ENCODE measurements at regions of chr11 and their contacts with region 1.

Region 1: DNA sequence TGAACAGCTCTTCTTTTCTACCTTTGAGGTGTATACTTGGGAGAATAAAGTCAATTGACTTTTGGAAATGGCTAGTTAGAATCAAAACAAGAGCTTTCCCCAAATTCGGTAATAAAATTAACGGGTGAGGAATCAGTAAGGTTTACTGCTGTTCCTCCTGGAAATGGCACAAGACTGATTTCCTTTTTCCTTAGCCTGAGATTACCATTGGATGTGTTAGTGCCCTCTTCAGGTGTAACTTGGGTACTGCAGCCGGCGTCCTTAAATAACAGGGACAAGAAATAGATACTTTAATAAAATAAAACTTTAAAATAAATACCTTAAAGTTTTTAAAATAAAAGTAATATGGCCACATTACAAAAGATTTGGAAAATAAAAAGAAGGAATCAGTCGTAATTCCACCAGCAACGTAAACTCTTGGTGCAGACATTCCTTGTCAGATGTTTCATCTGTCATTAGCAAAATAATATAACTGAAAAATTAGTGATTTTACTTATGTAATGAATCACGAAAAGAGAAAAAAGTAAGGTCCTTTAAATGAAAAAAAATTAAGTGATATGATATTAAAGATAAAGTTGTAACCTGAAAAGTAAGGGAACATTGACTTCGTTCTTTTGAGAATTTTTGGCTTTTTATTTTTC is 29.7 kb downstream of the ZFTA start:
- DNase-seq: no peak
- H3K4me3 ChIP-seq: no peak overlapping the region
- H3K27ac ChIP-seq: peak overlapping the region in 1 of 4 donors; percentile 7
- H3K4me1 ChIP-seq: peaks cover 0 to 10% (median 0%) of the 10 kb centered on the region in 3 donors
- H3K27me3 ChIP-seq: no peaks in the 10 kb centered on the region
- CTCF ChIP-seq: peak; percentile 83 to 99 (median 94)
- POLR2A ChIP-seq: no peak

Region 2: GRCh38 chr11:63289658-63290057 is 449.2 kb before region 1 on chr11:
- intact Hi-C with region 1: no loop called
- DNase-seq: no peak
- H3K4me3 ChIP-seq: no peak overlapping the region
- H3K27ac ChIP-seq: no peak overlapping the region
- H3K4me1 ChIP-seq: no peaks in the 10 kb centered on the region
- H3K27me3 ChIP-seq: peaks cover 0 to 4% (median 0%) of the 10 kb centered on the region in 4 donors
- CTCF ChIP-seq: no peak
- POLR2A ChIP-seq: no peak

Region 3: DNA sequence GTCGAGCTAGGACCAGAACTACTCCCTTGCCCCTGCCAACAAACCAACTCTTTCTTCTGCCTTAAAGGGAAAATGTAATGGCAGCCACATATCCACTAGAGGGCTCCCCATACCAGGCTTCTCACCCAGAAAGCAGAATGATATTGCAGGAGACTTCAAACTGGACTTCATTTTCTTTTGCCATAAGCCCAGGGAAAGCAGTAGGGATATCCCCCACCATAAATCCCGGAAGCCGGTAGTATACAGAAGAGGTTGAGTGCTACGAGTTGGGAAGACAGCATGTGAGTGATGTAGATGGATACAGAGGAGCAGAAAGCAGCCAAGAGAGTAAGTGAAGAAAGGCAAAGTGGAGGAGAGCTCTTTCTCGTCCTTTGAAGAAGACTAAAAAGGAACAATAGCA is 259.9 kb before region 1 on chr11:
- intact Hi-C with region 1: loop called (anchors 10 kb)
- DNase-seq: no peak
- H3K4me3 ChIP-seq: no peak overlapping the region
- H3K27ac ChIP-seq: no peak overlapping the region
- H3K4me1 ChIP-seq: no peaks in the 10 kb centered on the region
- H3K27me3 ChIP-seq: no peaks in the 10 kb centered on the region
- CTCF ChIP-seq: peak; percentile 60 to 92 (median 88)
- POLR2A ChIP-seq: no peak

Region 4: GRCh38 chr11:63641727-63642126 is 97.1 kb before region 1 on chr11:
- intact Hi-C with region 1: loop called (anchors 10 kb)
- DNase-seq: no peak
- H3K4me3 ChIP-seq: no peak overlapping the region
- H3K27ac ChIP-seq: no peak overlapping the region
- H3K4me1 ChIP-seq: peaks cover 0 to 5% (median 0%) of the 10 kb centered on the region in 3 donors
- H3K27me3 ChIP-seq: no peaks in the 10 kb centered on the region
- CTCF ChIP-seq: no peak
- POLR2A ChIP-seq: no peak

Region 5: GRCh38 chr11:63681321-63682049 is 57.4 kb before region 1 on chr11 and contains the start of gene RTN3:
- intact Hi-C with region 1: loop called (anchors 10 kb)
- DNase-seq: peak; percentile 69
- H3K4me3 ChIP-seq: peak within 1 kb of the TSS; percentile 71 to 93 (median 90)
- H3K27ac ChIP-seq: peak within 1 kb of the TSS; percentile 95 to 98 (median 98)
- H3K4me1 ChIP-seq: peaks cover 19 to 50% (median 20%) of the 10 kb centered on the region in 3 donors
- H3K27me3 ChIP-seq: no peaks in the 10 kb centered on the region
- CTCF ChIP-seq: peak in 3 of 6 experiments; percentile 18 to 82 (median 26)
- POLR2A ChIP-seq: peak in 3 of 4 donors; percentile 86 to 97 (median 96)
- total RNA-seq, gene RTN3: 48.0 to 78.3 (median 58.4) TPM

Region 6: DNA sequence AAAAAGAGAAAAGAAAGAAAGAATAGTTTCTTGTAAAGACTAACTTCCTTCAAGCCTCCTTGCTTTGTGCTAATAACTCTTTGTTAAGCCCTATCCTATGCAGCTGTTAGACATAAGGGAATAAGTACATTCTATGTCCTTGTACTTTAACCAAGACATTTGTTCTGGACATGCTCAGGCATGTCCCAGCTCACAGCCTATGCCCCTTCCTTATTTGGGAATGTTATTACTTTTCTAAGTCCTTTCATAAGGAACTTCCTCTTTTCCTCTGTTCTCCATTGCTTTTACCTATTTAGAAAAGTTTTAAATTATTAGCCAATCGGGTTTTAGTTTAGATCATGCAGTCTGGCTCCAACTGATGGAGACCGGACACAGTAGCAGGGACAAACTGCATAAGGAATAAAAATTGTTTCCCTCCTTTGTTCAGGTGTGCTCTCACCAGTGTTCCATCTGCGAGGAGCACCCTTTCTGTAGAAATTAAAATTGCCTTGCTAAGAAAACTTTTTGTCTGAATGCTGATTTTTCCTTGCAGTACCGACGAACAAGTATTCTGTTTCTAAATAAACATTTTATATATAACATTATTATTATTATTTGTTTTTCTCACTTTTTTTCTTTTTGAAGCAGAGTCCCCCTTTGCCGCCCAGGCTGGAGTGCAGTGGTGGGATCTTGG is 52.8 kb after region 1 on chr11:
- intact Hi-C with region 1: no loop called
- DNase-seq: no peak
- H3K4me3 ChIP-seq: no peak overlapping the region
- H3K27ac ChIP-seq: no peak overlapping the region
- H3K4me1 ChIP-seq: no peaks in the 10 kb centered on the region
- H3K27me3 ChIP-seq: no peaks in the 10 kb centered on the region
- CTCF ChIP-seq: no peak
- POLR2A ChIP-seq: no peak

Region 7: DNA sequence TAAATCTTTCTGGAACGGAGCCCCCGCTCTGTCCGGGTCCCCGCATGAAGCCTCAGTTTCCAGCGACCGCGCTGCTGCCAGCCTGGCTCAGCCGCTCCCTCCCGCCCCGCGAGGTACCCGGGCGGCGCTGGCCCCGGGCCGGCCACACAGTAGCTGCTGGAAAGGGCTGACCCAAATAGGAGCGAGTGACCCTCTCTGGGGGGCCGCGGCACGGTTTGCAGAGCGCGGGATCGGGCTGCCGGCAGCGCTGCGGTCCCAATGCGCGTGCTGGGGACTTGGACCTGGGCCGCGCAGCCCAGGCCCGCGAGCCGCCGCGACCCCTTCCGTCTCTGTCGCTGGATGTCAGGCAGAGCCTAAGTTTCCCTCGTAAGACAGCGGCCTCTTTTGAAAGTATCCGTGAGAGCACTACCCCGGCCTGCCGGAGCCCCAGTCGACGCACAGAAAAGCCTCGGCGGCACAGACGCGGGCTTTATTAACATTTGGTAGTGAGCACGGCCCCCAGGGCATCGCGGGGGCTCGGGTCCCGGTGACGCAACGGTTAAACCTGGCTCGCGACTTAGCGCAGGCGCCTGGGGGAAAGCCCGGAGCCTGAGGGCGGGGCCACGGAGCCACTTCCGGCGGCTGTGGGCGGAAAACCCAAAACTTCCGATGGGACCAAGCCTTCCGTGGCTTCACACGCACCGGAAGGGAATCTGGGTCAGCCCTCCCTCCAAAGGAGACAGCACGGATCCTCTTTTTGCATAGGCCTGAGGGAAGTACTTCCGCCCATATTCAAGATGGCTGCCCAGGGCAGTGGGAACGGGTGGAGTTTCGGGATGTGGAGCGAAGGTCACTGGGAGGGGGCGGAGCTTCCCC is 530.8 kb after region 1 on chr11:
- intact Hi-C with region 1: no loop called
- DNase-seq: peak; percentile 83
- H3K4me3 ChIP-seq: peak overlapping the region; percentile 58 to 87 (median 76)
- H3K27ac ChIP-seq: peak overlapping the region; percentile 98 to 99 (median 98)
- H3K4me1 ChIP-seq: peaks cover 31 to 63% (median 32%) of the 10 kb centered on the region in 3 donors
- H3K27me3 ChIP-seq: no peaks in the 10 kb centered on the region
- CTCF ChIP-seq: peak in 3 of 6 experiments; percentile 7 to 27 (median 10)
- POLR2A ChIP-seq: peak in 3 of 4 donors; percentile 17 to 55 (median 29)

Region 8: GRCh38 chr11:64304316-64305072 is 565.7 kb after region 1 on chr11:
- intact Hi-C with region 1: no loop called
- DNase-seq: peak; percentile 67
- H3K4me3 ChIP-seq: peak overlapping the region; percentile 35 to 86 (median 74)
- H3K27ac ChIP-seq: peak overlapping the region; percentile 92 to 97 (median 94)
- H3K4me1 ChIP-seq: peaks cover 33 to 64% (median 37%) of the 10 kb centered on the region in 3 donors
- H3K27me3 ChIP-seq: peaks cover 0 to 35% (median 6%) of the 10 kb centered on the region in 4 donors
- CTCF ChIP-seq: peak; percentile 81 to 95 (median 92)
- POLR2A ChIP-seq: peak in 1 of 4 donors; percentile 19

Measured in esophagus squamous epithelium (tissue), 5 donors.